ENCODE measurements at regions of chr2 and their contacts with region 1.

Region 1: GRCh38 chr2:200417366-200417765 is 92.5 kb downstream of the KCTD18 start:
- DNase-seq: no peak
- H3K4me3 Mint-ChIP-seq: no peak overlapping the region
- H3K27ac Mint-ChIP-seq: no peak overlapping the region
- H3K4me1 Mint-ChIP-seq: no peaks in the 10 kb centered on the region
- H3K27me3 Mint-ChIP-seq: no peaks in the 10 kb centered on the region

Region 2: GRCh38 chr2:200405599-200406298 is 11.6 kb before region 1 on chr2:
- CTCF ChIA-PET with region 1: interaction called, 11 read pairs
- POLR2A ChIA-PET with region 1: no interaction called
- DNase-seq: no peak
- H3K4me3 Mint-ChIP-seq: no peak overlapping the region
- H3K27ac Mint-ChIP-seq: peak overlapping the region; percentile 25
- H3K4me1 Mint-ChIP-seq: peaks cover 47% of the 10 kb centered on the region
- H3K27me3 Mint-ChIP-seq: no peaks in the 10 kb centered on the region

Region 3: DNA sequence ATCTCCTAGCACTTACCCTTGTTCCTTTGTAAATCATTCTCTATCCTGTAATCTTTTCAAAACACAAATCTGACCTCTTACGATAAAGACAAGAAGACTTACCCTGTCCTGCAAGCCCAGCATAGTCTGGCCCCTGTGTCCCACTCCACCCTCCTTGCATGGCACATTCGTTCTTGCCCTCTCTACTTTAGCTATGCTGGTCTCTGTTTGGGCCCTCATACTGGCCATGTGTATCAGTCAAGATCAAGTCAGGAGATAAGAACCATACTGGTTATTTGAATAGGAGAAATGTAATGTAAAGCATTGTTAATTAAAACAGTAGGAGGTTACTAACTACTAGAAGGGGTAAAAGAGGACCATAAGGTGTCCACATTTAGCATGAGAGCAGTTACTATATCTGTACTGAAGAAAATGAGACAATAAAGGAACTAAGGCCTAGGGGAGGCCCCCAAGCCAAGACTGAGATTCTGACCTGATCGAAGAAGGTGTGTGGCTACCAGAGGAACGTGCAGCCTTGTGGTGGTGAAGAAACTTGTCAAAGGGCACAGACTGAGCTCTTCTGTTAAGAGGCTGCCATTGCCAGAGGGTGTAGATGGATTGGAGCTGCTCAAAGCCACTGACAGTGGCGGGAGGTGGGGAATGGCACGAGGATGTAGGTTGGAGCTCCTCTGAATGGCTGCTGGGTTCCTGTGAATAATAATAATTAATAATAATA is 11.7 kb after region 1 on chr2:
- CTCF ChIA-PET with region 1: no interaction called
- POLR2A ChIA-PET with region 1: no interaction called
- DNase-seq: no peak
- H3K4me3 Mint-ChIP-seq: no peak overlapping the region
- H3K27ac Mint-ChIP-seq: no peak overlapping the region
- H3K4me1 Mint-ChIP-seq: peaks cover 16% of the 10 kb centered on the region
- H3K27me3 Mint-ChIP-seq: no peaks in the 10 kb centered on the region